SK-N-SH (cell line): ENCODE measurements at regions of chr3 and their contacts with region 1.

Region 1: DNA sequence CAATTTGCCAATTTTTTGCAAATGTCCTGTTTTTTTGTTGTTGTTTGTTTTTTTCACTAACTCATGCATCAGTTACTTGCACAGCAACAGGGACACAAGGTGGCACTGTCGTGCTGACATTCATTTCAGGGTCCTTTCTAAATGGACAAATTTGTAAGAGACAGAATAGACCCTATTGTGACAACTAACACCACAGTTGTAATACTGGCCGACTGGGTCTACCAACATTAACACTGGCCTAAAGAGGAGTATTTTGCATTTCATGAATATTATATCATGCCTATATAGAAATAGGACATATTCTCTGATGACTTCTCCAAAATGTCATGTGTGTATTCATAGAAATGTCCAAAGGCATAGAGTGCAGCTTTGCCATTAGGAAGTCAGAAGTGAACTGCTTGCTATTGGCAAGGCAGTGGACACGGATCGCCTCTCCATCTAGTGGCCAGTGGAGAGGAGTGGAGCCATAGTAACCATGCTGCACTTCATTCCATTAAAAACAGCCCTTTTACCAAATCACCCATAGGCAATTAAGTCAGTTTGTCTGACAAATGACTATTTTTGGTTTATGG is 54.8 kb downstream of the ZBTB20 start:
- DNase-seq: peak; percentile 47
- H3K4me3 ChIP-seq: peak overlapping the region in 1 of 2 experiments; percentile 20; a peak in 1 of 4 replicates
- H3K27ac ChIP-seq: peak overlapping the region in 1 of 2 experiments; percentile 39; a peak in 2 of 4 replicates
- H3K4me1 ChIP-seq: peaks cover 0 to 5% of the 10 kb centered on the region in 2 experiments; a peak in 2 of 4 replicates
- H3K27me3 ChIP-seq: no peaks in the 10 kb centered on the region
- CTCF ChIP-seq: peak; percentile 81
- EP300 ChIP-seq: no peak
- RAD21 ChIP-seq: peak; percentile 77

Region 2: DNA sequence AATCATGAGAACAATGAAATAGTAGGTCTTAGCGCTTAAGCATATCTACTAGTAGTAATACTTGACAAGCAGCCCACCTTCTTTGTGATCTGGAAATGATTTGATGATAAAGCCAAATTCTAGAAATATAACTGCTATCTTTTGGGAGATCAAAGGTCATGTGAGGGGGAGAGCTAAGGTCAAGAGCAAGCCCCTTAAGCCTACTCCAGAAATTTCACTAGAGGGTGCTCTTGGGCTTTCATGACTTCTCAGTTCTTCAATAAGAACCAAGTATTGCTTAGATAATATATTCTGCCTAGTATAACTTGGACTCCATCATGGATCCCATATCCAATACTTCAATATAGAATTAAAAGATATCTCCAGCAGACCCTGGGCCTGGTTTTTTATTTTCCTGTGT is 264.8 kb before region 1 on chr3:
- CTCF ChIA-PET with region 1: interaction called, 35 read pairs
- POLR2A ChIA-PET with region 1: no interaction called
- DNase-seq: peak; percentile 38
- H3K4me3 ChIP-seq: no peak overlapping the region; a peak in 1 of 4 replicates
- H3K27ac ChIP-seq: no peak overlapping the region
- H3K4me1 ChIP-seq: no peaks in the 10 kb centered on the region
- H3K27me3 ChIP-seq: no peaks in the 10 kb centered on the region
- CTCF ChIP-seq: peak; percentile 78
- EP300 ChIP-seq: no peak
- RAD21 ChIP-seq: peak; percentile 88

Region 3: DNA sequence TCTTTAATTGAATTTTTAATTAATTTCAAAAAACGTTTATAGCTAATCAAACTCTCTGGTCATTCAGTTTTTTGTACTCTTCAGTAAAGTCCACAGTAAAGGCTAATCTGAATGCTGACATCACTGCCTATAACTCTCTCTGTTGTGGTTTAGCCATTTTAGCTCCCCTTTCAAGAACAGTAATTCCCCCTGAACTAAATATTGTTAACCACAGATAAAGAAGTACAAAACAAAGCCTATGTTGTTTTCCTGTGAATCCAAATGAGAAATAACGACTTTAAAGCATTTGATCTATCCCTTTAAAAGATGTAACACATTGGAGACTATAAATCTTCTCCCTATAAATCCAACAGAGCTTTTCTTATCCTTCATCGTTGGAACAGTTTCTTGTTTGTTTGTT is 39.4 kb before region 1 on chr3:
- CTCF ChIA-PET with region 1: interaction called, 13 read pairs
- POLR2A ChIA-PET with region 1: no interaction called
- DNase-seq: no peak
- H3K4me3 ChIP-seq: no peak overlapping the region
- H3K27ac ChIP-seq: no peak overlapping the region
- H3K4me1 ChIP-seq: no peaks in the 10 kb centered on the region
- H3K27me3 ChIP-seq: no peaks in the 10 kb centered on the region
- CTCF ChIP-seq: no peak
- EP300 ChIP-seq: no peak
- RAD21 ChIP-seq: no peak

Region 4: GRCh38 chr3:115169808-115170207 is 77.5 kb after region 1 on chr3:
- CTCF ChIA-PET with region 1: interaction called, 25 read pairs
- POLR2A ChIA-PET with region 1: no interaction called
- DNase-seq: no peak
- H3K4me3 ChIP-seq: no peak overlapping the region
- H3K27ac ChIP-seq: no peak overlapping the region
- H3K4me1 ChIP-seq: no peaks in the 10 kb centered on the region
- H3K27me3 ChIP-seq: no peaks in the 10 kb centered on the region
- CTCF ChIP-seq: peak; percentile 62
- EP300 ChIP-seq: no peak
- RAD21 ChIP-seq: peak; percentile 17; the same call in 1 of the 2 replicates

Region 5: GRCh38 chr3:115692887-115693524 is 600.7 kb after region 1 on chr3:
- CTCF ChIA-PET with region 1: interaction called, 11 read pairs
- POLR2A ChIA-PET with region 1: no interaction called
- DNase-seq: peak; percentile 74
- H3K4me3 ChIP-seq: peak overlapping the region in 1 of 2 experiments; percentile 36; a peak in 1 of 4 replicates
- H3K27ac ChIP-seq: peak overlapping the region; percentile 5 to 98; a peak in 3 of 4 replicates
- H3K4me1 ChIP-seq: peaks cover 0 to 16% of the 10 kb centered on the region in 2 experiments; a peak in 3 of 4 replicates
- H3K27me3 ChIP-seq: no peaks in the 10 kb centered on the region
- CTCF ChIP-seq: peak; percentile 86
- EP300 ChIP-seq: peak in 1 of 2 experiments; percentile 6; a peak in 1 of 4 replicates
- RAD21 ChIP-seq: peak; percentile 99

Region 6: GRCh38 chr3:115819785-115820384 is 727.6 kb after region 1 on chr3:
- CTCF ChIA-PET with region 1: interaction called, 11 read pairs
- POLR2A ChIA-PET with region 1: no interaction called
- DNase-seq: peak; percentile 57
- H3K4me3 ChIP-seq: no peak overlapping the region; a peak in 1 of 4 replicates
- H3K27ac ChIP-seq: no peak overlapping the region
- H3K4me1 ChIP-seq: peaks cover 0 to 2% of the 10 kb centered on the region in 2 experiments; a peak in 2 of 4 replicates
- H3K27me3 ChIP-seq: no peaks in the 10 kb centered on the region
- CTCF ChIP-seq: peak; percentile 100
- EP300 ChIP-seq: no peak
- RAD21 ChIP-seq: peak; percentile 91

Region 7: GRCh38 chr3:115891006-115891636 is 798.8 kb after region 1 on chr3:
- CTCF ChIA-PET with region 1: no interaction called
- POLR2A ChIA-PET with region 1: no interaction called
- DNase-seq: no peak
- H3K4me3 ChIP-seq: no peak overlapping the region
- H3K27ac ChIP-seq: no peak overlapping the region
- H3K4me1 ChIP-seq: no peaks in the 10 kb centered on the region
- H3K27me3 ChIP-seq: no peaks in the 10 kb centered on the region
- CTCF ChIP-seq: no peak
- EP300 ChIP-seq: no peak
- RAD21 ChIP-seq: no peak